CD4-positive, alpha-beta T cell (primary cell): ENCODE measurements at regions of chr6 and their contacts with region 1.

Region 1: GRCh38 chr6:26122793-26123674 is 35.8 kb downstream of the HFE start:
- DNase-seq: peak; percentile 75 to 98 (median 92)
- ATAC-seq: peak; percentile 56
- H3K4me3 ChIP-seq: peak overlapping the region; percentile 88
- H3K4me3 Mint-ChIP-seq: peak overlapping the region; percentile 97
- H3K27ac ChIP-seq: peak overlapping the region; percentile 84 to 95
- H3K27ac Mint-ChIP-seq: peak overlapping the region; percentile 98
- H3K4me1 ChIP-seq: peaks cover 23% of the 10 kb centered on the region
- H3K4me1 Mint-ChIP-seq: peaks cover 41% of the 10 kb centered on the region
- H3K27me3 ChIP-seq: no peaks in the 10 kb centered on the region
- H3K27me3 Mint-ChIP-seq: peaks cover 13% of the 10 kb centered on the region
- CTCF ChIP-seq: no peak

Region 2: DNA sequence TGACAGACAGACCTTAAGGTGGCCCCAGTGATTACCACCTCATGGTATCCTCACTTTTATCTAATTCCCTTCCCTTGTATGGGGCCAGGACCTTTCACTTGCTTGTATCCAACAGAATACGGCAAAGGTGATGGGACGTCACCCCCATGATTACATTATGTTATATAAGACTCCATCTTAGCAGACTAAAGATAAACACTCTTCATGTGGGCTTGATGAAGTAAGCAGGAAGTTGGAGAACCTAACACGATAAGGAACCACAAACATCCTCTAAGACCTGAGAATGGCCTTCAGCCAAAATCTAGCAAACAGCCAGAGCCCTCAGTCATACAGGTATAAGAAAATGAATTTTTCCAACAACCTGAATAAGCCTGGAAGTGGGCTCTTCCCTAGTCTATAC is 257.0 kb before region 1 on chr6:
- CTCF ChIA-PET with region 1: no interaction called
- POLR2A ChIA-PET with region 1: no interaction called
- intact Hi-C with region 1: no loop called
- DNase-seq: peak in 9 of 14 experiments; percentile 0 to 88 (median 14)
- ATAC-seq: peak; percentile 93
- H3K4me3 ChIP-seq: no peak overlapping the region
- H3K4me3 Mint-ChIP-seq: peak overlapping the region; percentile 42
- H3K27ac ChIP-seq: peak overlapping the region in 1 of 2 donors; percentile 46
- H3K27ac Mint-ChIP-seq: peak overlapping the region; percentile 78
- H3K4me1 ChIP-seq: peaks cover 12% of the 10 kb centered on the region
- H3K4me1 Mint-ChIP-seq: peaks cover 33% of the 10 kb centered on the region
- H3K27me3 ChIP-seq: no peaks in the 10 kb centered on the region
- H3K27me3 Mint-ChIP-seq: no peaks in the 10 kb centered on the region
- CTCF ChIP-seq: no peak

Region 3: GRCh38 chr6:26025894-26026832 is 96.9 kb before region 1 on chr6:
- CTCF ChIA-PET with region 1: interaction called, 8 read pairs
- POLR2A ChIA-PET with region 1: interaction called, 185 read pairs
- intact Hi-C with region 1: loop called in 1 of 2 experiments (anchors 2 kb)
- DNase-seq: peak; percentile 75 to 98 (median 88)
- ATAC-seq: peak; percentile 45
- H3K4me3 ChIP-seq: peak overlapping the region; percentile 70
- H3K4me3 Mint-ChIP-seq: peak overlapping the region; percentile 90
- H3K27ac ChIP-seq: peak overlapping the region; percentile 86 to 88
- H3K27ac Mint-ChIP-seq: peak overlapping the region; percentile 97
- H3K4me1 ChIP-seq: peaks cover 34% of the 10 kb centered on the region
- H3K4me1 Mint-ChIP-seq: peaks cover 42% of the 10 kb centered on the region
- H3K27me3 ChIP-seq: no peaks in the 10 kb centered on the region
- H3K27me3 Mint-ChIP-seq: no peaks in the 10 kb centered on the region
- CTCF ChIP-seq: peak; percentile 86

Region 4: DNA sequence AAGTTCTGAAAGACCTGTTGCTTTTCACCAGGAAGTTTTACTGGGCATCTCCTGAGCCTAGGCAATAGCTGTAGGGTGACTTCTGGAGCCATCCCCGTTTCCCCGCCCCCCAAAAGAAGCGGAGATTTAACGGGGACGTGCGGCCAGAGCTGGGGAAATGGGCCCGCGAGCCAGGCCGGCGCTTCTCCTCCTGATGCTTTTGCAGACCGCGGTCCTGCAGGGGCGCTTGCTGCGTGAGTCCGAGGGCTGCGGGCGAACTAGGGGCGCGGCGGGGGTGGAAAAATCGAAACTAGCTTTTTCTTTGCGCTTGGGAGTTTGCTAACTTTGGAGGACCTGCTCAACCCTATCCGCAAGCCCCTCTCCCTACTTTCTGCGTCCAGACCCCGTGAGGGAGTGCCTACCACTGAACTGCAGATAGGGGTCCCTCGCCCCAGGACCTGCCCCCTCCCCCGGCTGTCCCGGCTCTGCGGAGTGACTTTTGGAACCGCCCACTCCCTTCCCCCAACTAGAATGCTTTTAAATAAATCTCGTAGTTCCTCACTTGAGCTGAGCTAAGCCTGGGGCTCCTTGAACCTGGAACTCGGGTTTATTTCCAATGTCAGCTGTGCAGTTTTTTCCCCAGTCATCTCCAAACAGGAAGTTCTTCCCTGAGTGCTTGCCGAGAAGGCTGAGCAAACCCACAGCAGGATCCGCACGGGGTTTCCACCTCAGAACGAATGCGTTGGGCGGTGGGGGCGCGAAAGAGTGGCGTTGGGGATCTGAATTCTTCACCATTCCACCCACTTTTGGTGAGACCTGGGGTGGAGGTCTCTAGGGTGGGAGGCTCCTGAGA is 35.5 kb before region 1 on chr6 and contains the start of gene HFE:
- CTCF ChIA-PET with region 1: no interaction called
- POLR2A ChIA-PET with region 1: interaction called, 67 read pairs
- intact Hi-C with region 1: no loop called
- DNase-seq: peak in 11 of 14 experiments; percentile 3 to 57 (median 21)
- ATAC-seq: peak; percentile 25
- H3K4me3 ChIP-seq: peak within 1 kb of the TSS; percentile 86
- H3K4me3 Mint-ChIP-seq: peak within 1 kb of the TSS; percentile 87
- H3K27ac ChIP-seq: peak within 1 kb of the TSS; percentile 23 to 61
- H3K27ac Mint-ChIP-seq: peak within 1 kb of the TSS; percentile 71
- H3K4me1 ChIP-seq: peaks cover 33% of the 10 kb centered on the region
- H3K4me1 Mint-ChIP-seq: peaks cover 34% of the 10 kb centered on the region
- H3K27me3 ChIP-seq: no peaks in the 10 kb centered on the region
- H3K27me3 Mint-ChIP-seq: no peaks in the 10 kb centered on the region
- CTCF ChIP-seq: no peak
- total RNA-seq, gene HFE: 0.08 to 0.28 TPM

Region 5: GRCh38 chr6:26183581-26184366 is 60.7 kb after region 1 on chr6:
- CTCF ChIA-PET with region 1: interaction called, 4 read pairs
- POLR2A ChIA-PET with region 1: interaction called, 1,005 read pairs
- intact Hi-C with region 1: no loop called
- DNase-seq: peak in 13 of 14 experiments; percentile 20 to 94 (median 48)
- ATAC-seq: peak; percentile 89
- H3K4me3 ChIP-seq: peak overlapping the region; percentile 62
- H3K4me3 Mint-ChIP-seq: peak overlapping the region; percentile 99
- H3K27ac ChIP-seq: peak overlapping the region; percentile 43 to 72
- H3K27ac Mint-ChIP-seq: peak overlapping the region; percentile 86
- H3K4me1 ChIP-seq: peaks cover 34% of the 10 kb centered on the region
- H3K4me1 Mint-ChIP-seq: peaks cover 42% of the 10 kb centered on the region
- H3K27me3 ChIP-seq: no peaks in the 10 kb centered on the region
- H3K27me3 Mint-ChIP-seq: no peaks in the 10 kb centered on the region
- CTCF ChIP-seq: no peak

Region 6: GRCh38 chr6:26285143-26286134 is 162.4 kb after region 1 on chr6:
- CTCF ChIA-PET with region 1: no interaction called
- POLR2A ChIA-PET with region 1: interaction called, 32 read pairs
- intact Hi-C with region 1: loop called in 1 of 2 experiments (anchors 2 kb)
- DNase-seq: peak; percentile 85 to 99 (median 92)
- ATAC-seq: peak; percentile 82
- H3K4me3 ChIP-seq: peak overlapping the region; percentile 62
- H3K4me3 Mint-ChIP-seq: peak overlapping the region; percentile 87
- H3K27ac ChIP-seq: peak overlapping the region; percentile 82 to 85
- H3K27ac Mint-ChIP-seq: peak overlapping the region; percentile 96
- H3K4me1 ChIP-seq: peaks cover 16% of the 10 kb centered on the region
- H3K4me1 Mint-ChIP-seq: peaks cover 24% of the 10 kb centered on the region
- H3K27me3 ChIP-seq: no peaks in the 10 kb centered on the region
- H3K27me3 Mint-ChIP-seq: peaks cover 11% of the 10 kb centered on the region
- CTCF ChIP-seq: no peak

Region 7: DNA sequence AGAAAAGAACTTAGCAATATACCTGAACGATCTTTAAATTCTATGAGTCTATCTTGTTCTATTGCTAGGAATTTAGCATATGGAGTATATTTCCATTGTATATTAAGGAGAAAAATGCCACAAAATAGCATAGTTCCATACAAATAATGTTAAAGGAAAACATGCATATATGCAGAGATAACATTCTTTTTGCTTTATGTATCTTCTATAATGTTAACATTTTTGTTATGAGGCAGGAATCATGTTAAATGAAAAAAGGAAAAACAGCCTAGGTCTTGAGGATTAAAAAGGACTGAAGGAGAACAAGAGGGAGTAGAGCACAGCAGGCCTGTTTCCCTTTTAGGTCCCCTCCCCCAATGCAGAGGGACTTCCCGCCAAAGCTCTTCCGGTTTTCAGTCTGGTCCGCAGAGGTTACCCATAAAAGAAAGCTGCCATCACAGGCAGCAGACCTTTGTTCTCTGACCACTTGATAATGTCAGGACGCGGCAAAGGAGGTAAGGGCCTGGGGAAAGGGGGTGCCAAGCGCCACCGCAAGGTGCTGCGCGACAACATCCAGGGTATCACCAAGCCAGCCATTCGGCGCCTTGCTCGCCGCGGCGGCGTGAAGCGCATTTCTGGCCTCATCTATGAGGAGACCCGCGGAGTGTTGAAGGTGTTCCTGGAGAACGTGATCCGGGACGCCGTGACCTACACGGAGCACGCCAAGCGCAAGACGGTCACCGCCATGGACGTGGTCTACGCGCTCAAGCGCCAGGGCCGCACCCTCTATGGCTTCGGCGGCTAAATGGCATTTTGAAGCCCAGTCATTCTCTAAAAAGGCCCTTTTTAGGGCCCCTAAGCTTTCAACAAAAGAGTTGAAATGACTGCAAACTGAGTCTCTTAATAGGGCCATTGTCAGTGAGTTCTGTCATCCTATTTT is 1016.1 kb after region 1 on chr6:
- CTCF ChIA-PET with region 1: no interaction called
- POLR2A ChIA-PET with region 1: interaction called, 85 read pairs
- intact Hi-C with region 1: loop called in 1 of 2 experiments (anchors 5 kb)
- DNase-seq: peak in 12 of 14 experiments; percentile 28 to 89 (median 52)
- ATAC-seq: peak; percentile 78
- H3K4me3 ChIP-seq: peak overlapping the region; percentile 80
- H3K4me3 Mint-ChIP-seq: peak overlapping the region; percentile 95
- H3K27ac ChIP-seq: peak overlapping the region; percentile 89 to 90
- H3K27ac Mint-ChIP-seq: peak overlapping the region; percentile 95
- H3K4me1 ChIP-seq: peaks cover 13% of the 10 kb centered on the region
- H3K4me1 Mint-ChIP-seq: peaks cover 43% of the 10 kb centered on the region
- H3K27me3 ChIP-seq: no peaks in the 10 kb centered on the region
- H3K27me3 Mint-ChIP-seq: no peaks in the 10 kb centered on the region
- CTCF ChIP-seq: no peak

Region 8: GRCh38 chr6:27838058-27838944 is 1715.3 kb after region 1 on chr6:
- CTCF ChIA-PET with region 1: no interaction called
- POLR2A ChIA-PET with region 1: interaction called, 133 read pairs
- intact Hi-C with region 1: loop called in 1 of 2 experiments (anchors 10 kb)
- DNase-seq: peak; percentile 52 to 98 (median 73)
- ATAC-seq: peak; percentile 73
- H3K4me3 ChIP-seq: peak overlapping the region; percentile 83
- H3K4me3 Mint-ChIP-seq: no peak overlapping the region
- H3K27ac ChIP-seq: peak overlapping the region; percentile 92 to 97
- H3K27ac Mint-ChIP-seq: no peak overlapping the region
- H3K4me1 ChIP-seq: peaks cover 32% of the 10 kb centered on the region
- H3K4me1 Mint-ChIP-seq: peaks cover 6% of the 10 kb centered on the region
- H3K27me3 ChIP-seq: peaks cover 0 to 6% of the 10 kb centered on the region in 2 experiments
- H3K27me3 Mint-ChIP-seq: peaks cover 12% of the 10 kb centered on the region
- CTCF ChIP-seq: no peak